ENCODE measurements at regions of chr6 and their contacts with region 1.

Region 1: GRCh38 chr6:34425498-34426410 is at the start of gene RPS10:
- DNase-seq: peak; percentile 99 to 100 (median 100)
- ATAC-seq: peak; percentile 94
- H3K4me3 ChIP-seq: peak within 1 kb of the TSS; percentile 65
- H3K27ac ChIP-seq: peak within 1 kb of the TSS; percentile 81
- H3K4me1 ChIP-seq: peaks cover 10 to 20% of the 10 kb centered on the region in 2 experiments; a peak in 4 of 5 replicates
- H3K27me3 ChIP-seq: no peaks in the 10 kb centered on the region
- CTCF ChIP-seq: peak in 2 of 3 experiments; percentile 34 to 37; a peak in 4 of 6 replicates
- EP300 ChIP-seq: no peak
- POLR2A ChIP-seq: peak; percentile 99
- RAD21 ChIP-seq: peak; percentile 11 to 38; a peak in 2 of 4 replicates
- polyA plus RNA-seq, gene RPS10: 2,680 to 3,048 TPM

Region 2: GRCh38 chr6:34436803-34437643 is 11.3 kb after region 1 on chr6:
- CTCF ChIA-PET with region 1: no interaction called
- POLR2A ChIA-PET with region 1: interaction called, 15 read pairs
- in situ Hi-C with region 1: no loop called
- intact Hi-C with region 1: no loop called
- DNase-seq: no peak
- ATAC-seq: no peak
- H3K4me3 ChIP-seq: no peak overlapping the region
- H3K27ac ChIP-seq: no peak overlapping the region
- H3K4me1 ChIP-seq: no peaks in the 10 kb centered on the region
- H3K27me3 ChIP-seq: no peaks in the 10 kb centered on the region
- CTCF ChIP-seq: no peak
- EP300 ChIP-seq: no peak
- POLR2A ChIP-seq: no peak
- RAD21 ChIP-seq: no peak

Region 3: GRCh38 chr6:34834789-34835518 is 409.2 kb after region 1 on chr6:
- CTCF ChIA-PET with region 1: no interaction called
- POLR2A ChIA-PET with region 1: no interaction called
- in situ Hi-C with region 1: no loop called
- intact Hi-C with region 1: no loop called
- DNase-seq: peak in 2 of 4 experiments; percentile 63 to 80
- ATAC-seq: peak; percentile 83
- H3K4me3 ChIP-seq: no peak overlapping the region
- H3K27ac ChIP-seq: no peak overlapping the region; the same call in 2 of the 3 replicates
- H3K4me1 ChIP-seq: peaks cover 9 to 23% of the 10 kb centered on the region in 2 experiments
- H3K27me3 ChIP-seq: no peaks in the 10 kb centered on the region
- CTCF ChIP-seq: no peak
- EP300 ChIP-seq: peak; percentile 63; the same call in 1 of the 2 replicates
- POLR2A ChIP-seq: no peak
- RAD21 ChIP-seq: no peak